ENCODE measurements at regions of chr6 and their contacts with region 1.

Region 1: DNA sequence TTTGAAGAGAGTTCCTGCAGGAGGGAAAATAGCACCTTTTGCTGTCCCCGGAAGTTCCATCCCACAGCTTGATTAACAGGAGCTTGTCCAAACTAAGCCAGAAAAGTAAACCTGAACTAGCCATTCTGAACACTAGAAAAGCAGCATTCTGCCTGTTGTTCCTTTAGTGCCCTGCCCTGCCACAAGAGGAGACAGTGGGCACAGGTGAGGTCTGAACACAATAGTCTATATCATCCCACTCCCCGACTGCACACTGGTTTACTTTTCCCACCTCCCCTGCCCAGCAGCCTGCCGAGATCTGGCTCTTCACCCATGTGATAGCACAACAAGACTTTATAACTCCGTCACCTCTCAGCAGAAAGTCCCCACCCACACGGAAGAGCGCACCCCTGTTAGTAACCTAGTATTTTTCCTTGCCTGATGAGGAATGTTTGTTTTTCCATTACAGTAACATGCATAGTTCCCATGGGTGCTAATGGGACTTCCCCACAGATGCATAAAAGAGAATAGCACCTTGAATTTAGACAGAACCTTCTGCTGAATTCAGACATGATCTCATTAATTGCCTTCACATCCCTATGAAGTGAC is 59.7 kb downstream of the TFAP2A start:
- DNase-seq: no peak
- H3K4me3 ChIP-seq: no peak overlapping the region
- H3K27ac ChIP-seq: no peak overlapping the region
- H3K4me1 ChIP-seq: no peaks in the 10 kb centered on the region
- H3K27me3 ChIP-seq: no peaks in the 10 kb centered on the region
- CTCF ChIP-seq: no peak

Region 2: DNA sequence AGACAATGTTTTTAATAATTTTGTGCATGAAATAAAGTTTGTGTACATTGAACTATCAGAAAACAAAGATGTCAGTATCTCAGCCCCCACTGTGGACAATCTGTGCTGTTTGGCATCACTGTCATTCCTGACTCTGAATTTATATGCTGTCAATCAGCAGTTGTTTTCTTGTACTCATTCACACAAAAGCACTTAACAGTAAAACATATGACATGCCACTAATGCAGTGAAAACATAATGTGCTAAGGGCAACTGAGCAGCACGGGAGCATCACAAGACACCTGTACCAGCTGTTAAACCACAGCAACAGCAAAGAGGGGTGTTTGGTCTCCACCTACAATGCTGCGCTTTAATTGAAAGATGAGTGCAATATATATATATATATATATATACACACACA is 1272.1 kb before region 1 on chr6:
- CTCF ChIA-PET with region 1: interaction called, 10 read pairs
- POLR2A ChIA-PET with region 1: no interaction called
- intact Hi-C with region 1: no loop called
- DNase-seq: no peak
- H3K4me3 ChIP-seq: no peak overlapping the region
- H3K27ac ChIP-seq: no peak overlapping the region
- H3K4me1 ChIP-seq: no peaks in the 10 kb centered on the region
- H3K27me3 ChIP-seq: no peaks in the 10 kb centered on the region
- CTCF ChIP-seq: no peak

Measured in PC-9 (cell line).